ENCODE measurements at regions of chr1 and their contacts with region 1.

Region 1: DNA sequence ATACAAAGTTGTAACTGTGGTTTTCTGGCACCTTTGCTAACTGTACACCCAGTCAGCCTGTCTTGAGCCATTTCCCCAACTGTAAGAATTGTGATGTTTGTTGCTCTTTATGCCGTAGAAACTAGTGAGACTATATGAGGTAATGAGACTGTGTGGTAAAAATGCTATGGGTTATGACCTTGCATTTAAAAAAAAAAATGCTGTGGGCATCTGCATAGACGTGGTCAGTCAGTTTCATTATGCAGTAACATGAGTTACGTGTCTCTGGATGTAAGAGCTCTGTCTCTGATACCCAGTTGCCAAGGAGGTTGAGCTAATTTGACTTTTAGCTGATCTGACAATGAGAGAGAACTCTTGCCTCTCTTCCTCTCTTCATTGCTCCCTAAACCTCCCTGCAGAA is 80.6 kb upstream of the LAMC2 start:
- DNase-seq: no peak
- H3K4me3 ChIP-seq: no peak overlapping the region
- H3K27ac ChIP-seq: peak overlapping the region; percentile 22
- H3K27me3 ChIP-seq: no peaks in the 10 kb centered on the region
- CTCF ChIP-seq: no peak

Region 2: DNA sequence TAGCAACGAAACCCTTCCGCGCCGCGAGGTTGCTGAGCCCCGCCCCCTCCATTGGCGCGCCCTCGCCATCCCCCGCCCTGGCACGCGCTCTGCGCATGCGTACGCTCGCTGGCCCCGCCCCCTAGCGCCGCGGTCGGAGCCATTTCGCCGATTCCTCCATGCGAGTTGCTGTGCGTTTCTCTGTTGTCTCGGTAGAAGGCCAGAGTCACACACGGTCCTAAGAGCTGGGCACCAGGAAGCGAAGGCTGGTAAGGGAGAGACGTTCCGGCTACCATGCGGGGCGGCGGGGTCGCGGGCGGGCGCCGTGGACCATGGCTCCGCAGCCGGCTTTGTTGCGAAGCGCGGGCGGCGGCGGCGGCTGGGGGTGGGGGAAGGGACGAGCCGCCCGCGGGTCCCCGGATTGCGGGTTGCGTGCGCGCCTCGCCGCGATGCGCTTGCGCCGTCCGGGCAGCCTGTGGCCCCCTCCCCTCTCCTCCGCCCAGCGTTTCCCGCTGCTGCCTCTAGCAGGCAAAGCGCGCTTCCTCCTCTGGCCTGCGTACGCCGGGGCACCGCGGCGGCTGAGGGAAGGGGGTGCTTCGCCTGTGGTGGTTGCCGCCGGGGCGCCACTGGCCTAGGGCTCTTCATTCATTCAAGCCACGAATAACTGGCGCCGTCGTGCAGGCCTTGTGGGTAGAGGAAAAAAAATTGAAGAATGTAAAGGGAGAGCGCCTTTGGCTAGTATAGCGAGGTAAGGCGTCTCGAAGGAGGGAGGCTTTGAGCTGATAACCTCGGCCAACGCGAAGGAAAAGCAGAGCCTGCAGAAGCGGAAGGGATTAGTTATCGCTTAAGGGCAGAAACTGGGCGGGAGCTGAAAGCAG is 266.0 kb before region 1 on chr1 and contains the start of gene DHX9:
- CTCF ChIA-PET with region 1: no interaction called
- POLR2A ChIA-PET with region 1: no interaction called
- DNase-seq: peak; percentile 68
- H3K4me3 ChIP-seq: peak within 1 kb of the TSS; percentile 96
- H3K27ac ChIP-seq: peak within 1 kb of the TSS; percentile 91
- H3K27me3 ChIP-seq: no peaks in the 10 kb centered on the region
- CTCF ChIP-seq: peak; percentile 29; the same call in 1 of the 2 replicates
- polyA plus RNA-seq, gene DHX9: 159 and 191 TPM in 2 replicates

Region 3: DNA sequence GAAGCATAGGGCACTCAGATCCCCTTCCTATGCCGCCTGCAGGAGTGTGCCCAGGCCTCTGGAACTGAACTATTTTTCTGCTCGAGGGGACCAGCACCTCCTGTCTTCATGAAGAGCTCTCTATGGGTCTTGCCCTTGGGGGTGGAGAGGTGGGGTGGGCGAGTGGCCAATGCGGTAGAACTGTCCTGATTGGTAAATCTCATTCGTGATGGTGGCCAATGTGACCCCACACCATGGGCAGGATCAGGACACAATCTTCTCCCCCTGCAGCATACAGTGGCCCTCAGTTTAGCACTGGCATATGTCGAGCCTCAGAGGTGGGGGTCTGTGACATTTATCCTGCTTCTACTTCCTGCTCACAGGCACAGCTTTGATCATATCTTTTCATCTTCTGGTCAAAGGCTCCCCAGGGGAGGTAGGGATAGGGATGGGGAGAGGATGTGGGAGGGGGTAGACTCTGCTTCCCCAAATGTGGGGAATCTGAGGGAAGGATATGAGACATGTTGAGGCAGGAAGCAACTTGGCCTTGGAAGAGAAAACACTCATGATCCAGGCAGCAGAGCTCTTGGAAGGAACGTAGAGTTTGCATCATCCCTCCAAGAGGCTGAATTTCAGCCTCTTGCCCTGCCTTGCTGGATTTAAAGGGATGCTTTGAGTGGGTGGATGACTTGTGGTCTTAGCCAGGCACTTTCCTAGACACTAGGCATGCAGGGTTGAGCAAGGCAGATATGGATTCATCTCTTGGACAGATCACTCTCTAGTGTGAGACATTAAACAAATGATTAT is 162.4 kb after region 1 on chr1:
- CTCF ChIA-PET with region 1: no interaction called
- POLR2A ChIA-PET with region 1: interaction called, 10 read pairs
- DNase-seq: peak; percentile 84
- H3K4me3 ChIP-seq: no peak overlapping the region
- H3K27ac ChIP-seq: peak overlapping the region; percentile 96
- H3K27me3 ChIP-seq: no peaks in the 10 kb centered on the region
- CTCF ChIP-seq: no peak